Activated CD8-positive, alpha-beta memory T cell treated with anti-CD3 and anti-CD28 coated beads, Interleukin-2, amount 10 ng/mL, durations not matched to agents 7 days and 5 days (primary cell): ENCODE measurements at regions of chr2 and their contacts with region 1.

Region 1: GRCh38 chr2:110157153-110157793 is 41.7 kb upstream of the MALL start:
- DNase-seq: peak; percentile 46
- ATAC-seq: peak; percentile 77
- H3K4me3 Mint-ChIP-seq: no peak overlapping the region
- H3K27ac Mint-ChIP-seq: no peak overlapping the region
- H3K4me1 Mint-ChIP-seq: peaks cover 6% of the 10 kb centered on the region
- H3K27me3 Mint-ChIP-seq: peaks cover 6% of the 10 kb centered on the region

Region 2: DNA sequence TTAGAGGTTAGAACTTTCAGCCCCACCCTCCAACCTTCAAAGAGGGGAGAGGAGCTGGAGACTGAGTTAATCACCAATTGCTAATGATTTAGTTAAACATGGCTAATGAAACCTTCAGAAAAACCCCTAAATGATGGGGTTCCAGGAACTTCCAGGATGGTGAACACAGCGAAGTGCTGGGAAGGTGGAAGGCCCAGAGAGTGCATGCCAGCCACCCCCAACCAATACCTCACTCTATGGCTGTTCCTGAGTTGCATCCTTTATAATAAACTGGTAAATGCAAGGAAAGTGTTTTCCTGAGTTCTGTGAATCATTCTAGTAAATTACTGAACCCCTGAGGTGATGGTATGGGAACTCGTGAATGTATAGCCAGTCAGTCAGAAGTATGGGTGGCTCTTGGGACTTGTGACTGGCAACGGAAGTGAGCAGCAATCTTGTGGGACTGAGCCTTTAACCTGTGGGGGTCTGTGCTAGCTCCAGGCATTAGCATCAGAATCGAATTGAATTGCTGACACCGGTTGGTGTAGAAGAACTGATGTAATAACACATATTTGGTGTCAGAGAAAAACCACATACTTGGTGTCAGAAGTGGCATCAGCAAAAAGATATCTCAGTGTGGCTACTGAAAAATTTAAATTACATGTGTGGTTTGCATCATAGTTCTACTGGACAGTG is 10.2 kb after region 1 on chr2:
- CTCF ChIA-PET with region 1: interaction called, 12 read pairs
- DNase-seq: no peak
- ATAC-seq: no peak
- H3K4me3 Mint-ChIP-seq: no peak overlapping the region
- H3K27ac Mint-ChIP-seq: no peak overlapping the region
- H3K4me1 Mint-ChIP-seq: peaks cover 3% of the 10 kb centered on the region
- H3K27me3 Mint-ChIP-seq: peaks cover 10% of the 10 kb centered on the region